Aorta (tissue), 5 donors: ENCODE measurements at regions of chr19 and their contacts with region 1.

Region 1: GRCh38 chr19:13707915-13708314 is 56.4 kb upstream of the MRI1 start:
- DNase-seq: no peak
- ATAC-seq: no peak
- H3K4me3 ChIP-seq: no peak overlapping the region
- H3K27ac ChIP-seq: peak overlapping the region in 1 of 2 donors; percentile 28
- H3K4me1 ChIP-seq: peaks cover 0 to 2% of the 10 kb centered on the region in 2 donors
- H3K27me3 ChIP-seq: no peaks in the 10 kb centered on the region

Region 2: DNA sequence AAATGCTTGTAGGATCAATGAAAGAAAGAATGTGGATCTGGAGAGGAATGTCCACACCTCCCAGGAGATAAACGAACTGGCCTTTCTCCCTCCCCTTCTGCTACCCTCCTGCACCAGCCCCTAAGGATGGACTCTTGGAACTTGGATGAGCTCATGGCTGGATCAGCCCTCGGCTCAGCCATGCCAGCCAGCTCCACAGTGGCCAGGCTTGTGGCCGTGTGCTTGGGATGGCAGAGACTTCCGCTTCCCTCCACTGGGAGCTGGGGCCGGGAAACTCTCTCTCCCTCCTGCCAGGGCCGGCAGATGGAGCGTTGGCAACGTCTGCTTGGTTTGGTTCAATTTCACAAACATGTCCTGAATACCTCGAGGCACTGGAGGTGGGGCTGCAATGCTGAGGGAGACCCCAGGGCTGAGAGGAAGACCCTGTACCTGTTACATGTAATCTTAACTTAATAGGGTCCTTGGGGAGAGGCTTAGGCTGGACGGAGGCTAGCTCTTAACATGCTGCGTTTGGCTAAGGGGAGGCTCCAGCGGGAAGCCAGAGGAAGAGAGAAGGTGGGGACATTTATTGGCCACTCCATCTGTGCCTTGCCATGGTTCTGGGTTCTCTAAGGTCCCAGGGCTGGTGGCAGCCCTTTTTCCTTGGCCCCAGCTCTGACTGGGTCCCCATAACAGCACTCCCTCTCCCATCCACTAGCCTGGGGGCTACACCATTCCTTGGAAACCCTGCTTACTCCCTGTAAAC is 405.2 kb before region 1 on chr19:
- intact Hi-C with region 1: loop called in 1 of 2 experiments (anchors 2 kb)
- DNase-seq: no peak
- ATAC-seq: no peak
- H3K4me3 ChIP-seq: no peak overlapping the region
- H3K27ac ChIP-seq: no peak overlapping the region
- H3K4me1 ChIP-seq: no peaks in the 10 kb centered on the region
- H3K27me3 ChIP-seq: no peaks in the 10 kb centered on the region